HEK293 (cell line): ENCODE measurements at regions of chr14 and their contacts with region 1.

Region 1: DNA sequence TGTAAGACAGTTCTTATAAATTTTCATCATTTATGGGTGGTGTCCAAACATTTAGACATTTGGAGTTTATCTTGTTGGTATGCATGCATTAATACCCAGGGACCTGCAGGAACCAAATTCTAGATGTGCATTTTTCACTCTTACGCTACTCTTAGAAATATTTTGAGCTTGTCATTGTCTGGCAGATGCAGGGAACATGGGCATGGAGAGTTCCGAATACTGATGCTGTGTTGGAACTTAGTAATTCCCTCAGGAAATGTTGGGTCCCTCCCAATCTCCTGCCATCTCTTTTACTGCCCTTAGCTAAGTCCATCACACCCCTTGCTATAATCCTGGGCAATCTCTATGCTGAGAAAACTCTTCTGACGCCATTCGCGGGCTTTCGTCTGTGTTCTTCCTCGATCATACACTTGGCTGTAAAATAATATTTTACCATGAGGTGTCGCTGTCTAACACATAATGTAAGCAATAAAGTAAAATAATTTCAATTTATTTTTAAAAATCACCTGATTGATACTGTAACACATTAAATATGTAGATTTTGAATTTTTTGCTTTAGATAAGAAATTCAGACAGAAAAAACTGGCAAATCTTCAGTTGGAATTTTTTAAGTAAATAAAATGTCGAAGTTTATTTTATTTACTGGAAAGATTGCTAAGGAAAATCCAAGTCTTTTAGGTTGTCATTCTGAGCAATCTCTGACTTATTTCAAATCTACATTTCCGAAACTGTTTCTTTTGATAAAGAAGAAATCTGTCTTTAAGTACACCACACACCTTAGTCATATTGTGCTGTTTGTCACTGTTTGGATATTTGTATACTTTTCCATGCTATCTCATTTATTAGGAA is 304.1 kb upstream of the SSTR1 start:
- H3K4me3 ChIP-seq: no peak overlapping the region
- H3K27ac ChIP-seq: no peak overlapping the region
- H3K4me1 ChIP-seq: peaks cover 2% of the 10 kb centered on the region; the same call in 1 of the 2 replicates
- CTCF ChIP-seq: 0 out of 2 replicates have a peak, but pooled peaks have one; percentile 7

Region 2: DNA sequence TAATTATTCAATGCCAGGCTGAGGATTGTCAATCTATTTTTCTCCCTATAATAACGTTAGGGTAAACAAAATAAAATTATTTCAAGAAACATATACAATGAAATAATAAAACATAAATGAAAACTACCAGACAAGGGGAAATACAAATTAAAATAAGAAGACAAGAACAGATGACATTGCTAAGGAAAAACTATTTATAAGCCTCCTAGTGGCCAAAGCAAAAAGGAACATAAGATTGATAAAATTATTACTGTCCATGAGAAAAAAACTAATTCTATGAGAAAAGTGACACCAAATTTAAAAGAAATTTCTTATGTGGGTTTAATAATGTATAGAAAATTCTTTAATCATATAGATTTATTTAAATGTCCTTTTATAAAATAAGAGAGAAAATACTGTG is 13.5 kb before region 1 on chr14:
- CTCF ChIA-PET with region 1: interaction called, 17 read pairs
- POLR2A ChIA-PET with region 1: no interaction called
- H3K4me3 ChIP-seq: no peak overlapping the region
- H3K27ac ChIP-seq: no peak overlapping the region
- H3K4me1 ChIP-seq: peaks cover 3% of the 10 kb centered on the region; the same call in 1 of the 2 replicates
- CTCF ChIP-seq: no peak

Region 3: DNA sequence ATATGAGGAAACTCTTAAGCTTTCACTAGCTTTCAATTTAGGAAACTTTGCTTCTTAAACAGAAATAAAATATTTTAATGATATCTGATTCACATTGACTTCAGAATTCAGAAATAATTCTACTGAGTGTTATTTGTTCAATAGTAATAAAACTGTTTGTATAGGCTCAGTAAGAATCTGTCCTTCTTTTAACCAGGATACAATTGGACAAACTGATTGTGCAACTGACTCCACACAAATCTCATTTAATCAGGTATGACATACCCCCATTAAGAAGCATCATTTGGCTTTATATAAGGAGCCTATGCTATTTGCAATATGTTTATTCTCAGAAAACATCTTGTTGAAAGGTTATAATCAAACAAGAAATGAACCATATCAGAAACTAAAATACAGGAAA is 12.7 kb after region 1 on chr14:
- CTCF ChIA-PET with region 1: interaction called, 10 read pairs
- POLR2A ChIA-PET with region 1: no interaction called
- H3K4me3 ChIP-seq: no peak overlapping the region
- H3K27ac ChIP-seq: no peak overlapping the region
- H3K4me1 ChIP-seq: no peaks in the 10 kb centered on the region
- CTCF ChIP-seq: no peak